PC-9 (cell line): ENCODE measurements at regions of chr18 and their contacts with region 1.

Region 1: DNA sequence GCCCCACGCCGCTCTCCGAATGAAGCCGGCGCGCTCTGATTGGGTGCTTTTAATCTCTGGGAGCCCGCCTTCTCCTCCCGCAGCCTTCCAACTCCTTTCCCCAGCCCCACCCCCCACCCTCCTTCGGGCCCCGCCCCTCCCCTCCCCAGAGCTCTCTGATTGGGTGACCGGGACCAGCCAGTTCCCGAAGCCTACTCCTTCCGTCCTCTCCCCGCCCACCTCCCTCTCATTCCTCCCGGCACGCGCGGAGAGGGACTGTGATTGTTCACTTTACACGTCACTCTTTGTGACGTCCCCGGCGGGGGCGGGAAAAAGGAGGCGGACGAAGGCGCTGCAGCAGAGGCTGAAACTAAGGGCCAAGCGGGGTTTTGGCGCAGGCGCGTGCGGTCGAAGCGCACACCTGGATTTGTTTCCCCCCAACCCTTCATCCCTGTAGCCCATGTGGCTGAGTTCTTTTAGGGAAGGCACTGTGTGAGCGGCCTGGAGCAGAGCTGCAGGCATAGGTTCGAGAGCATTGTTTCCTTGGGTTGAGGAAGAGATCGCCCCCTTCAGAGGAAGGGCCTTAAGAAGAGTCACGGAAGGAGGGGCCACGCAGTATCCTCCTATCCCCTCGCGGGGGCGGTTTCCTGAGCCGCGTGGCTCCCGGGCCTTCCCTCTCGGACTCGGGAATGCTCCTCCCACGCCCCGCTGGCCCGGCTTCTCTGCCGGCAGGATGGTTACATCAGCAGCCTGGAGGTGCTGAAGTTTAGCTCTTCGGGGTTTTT is at the start of gene MEX3C:
- DNase-seq: peak; percentile 94 to 95
- H3K4me3 ChIP-seq: peak within 1 kb of the TSS; percentile 92
- H3K27ac ChIP-seq: peak within 1 kb of the TSS; percentile 92
- H3K4me1 ChIP-seq: peaks cover 19% of the 10 kb centered on the region
- H3K27me3 ChIP-seq: no peaks in the 10 kb centered on the region
- CTCF ChIP-seq: peak; percentile 36; the same call in 1 of the 2 replicates
- total RNA-seq, gene MEX3C: 21.1 and 26.2 TPM in 2 replicates

Region 2: GRCh38 chr18:50902797-50903196 is 295.0 kb before region 1 on chr18:
- CTCF ChIA-PET with region 1: no interaction called
- POLR2A ChIA-PET with region 1: no interaction called
- intact Hi-C with region 1: no loop called
- DNase-seq: no peak
- H3K4me3 ChIP-seq: no peak overlapping the region
- H3K27ac ChIP-seq: no peak overlapping the region
- H3K4me1 ChIP-seq: no peaks in the 10 kb centered on the region
- H3K27me3 ChIP-seq: no peaks in the 10 kb centered on the region
- CTCF ChIP-seq: no peak

Region 3: GRCh38 chr18:51135795-51136194 is 62.0 kb before region 1 on chr18:
- CTCF ChIA-PET with region 1: no interaction called
- POLR2A ChIA-PET with region 1: no interaction called
- intact Hi-C with region 1: loop called (anchors 5 kb)
- DNase-seq: no peak
- H3K4me3 ChIP-seq: no peak overlapping the region
- H3K27ac ChIP-seq: no peak overlapping the region
- H3K4me1 ChIP-seq: peaks cover 32% of the 10 kb centered on the region
- H3K27me3 ChIP-seq: no peaks in the 10 kb centered on the region
- CTCF ChIP-seq: 0 out of 2 replicates have a peak, but pooled peaks have one; percentile 34

Region 4: GRCh38 chr18:51235011-51235789 is 37.4 kb after region 1 on chr18:
- CTCF ChIA-PET with region 1: no interaction called
- POLR2A ChIA-PET with region 1: interaction called, 7 read pairs
- intact Hi-C with region 1: loop called (anchors 5 kb)
- DNase-seq: peak; percentile 26 to 59
- H3K4me3 ChIP-seq: peak overlapping the region; percentile 31; the same call in 1 of the 2 replicates
- H3K27ac ChIP-seq: peak overlapping the region; percentile 64
- H3K4me1 ChIP-seq: peaks cover 36% of the 10 kb centered on the region
- H3K27me3 ChIP-seq: no peaks in the 10 kb centered on the region
- CTCF ChIP-seq: no peak

Region 5: DNA sequence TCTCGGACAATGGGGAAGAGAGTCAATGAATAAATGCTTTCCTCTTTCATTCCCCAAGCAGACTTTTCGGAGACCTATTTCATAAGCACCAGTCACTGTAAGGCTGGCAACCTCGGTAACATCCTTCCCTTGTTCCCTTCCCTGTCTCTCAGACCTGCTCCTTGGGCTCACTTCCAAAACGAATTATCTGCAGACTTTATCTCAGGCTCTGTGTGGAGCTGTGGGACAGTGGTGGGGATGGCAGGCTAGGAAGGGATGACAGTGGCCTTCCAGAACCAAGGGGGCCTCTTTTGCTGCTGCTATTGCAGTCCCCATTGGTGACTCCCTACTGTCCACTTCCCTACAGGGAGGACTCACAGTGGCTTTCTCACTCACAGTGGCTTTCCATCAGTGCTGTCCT is 185.3 kb after region 1 on chr18:
- CTCF ChIA-PET with region 1: no interaction called
- POLR2A ChIA-PET with region 1: no interaction called
- intact Hi-C with region 1: no loop called
- DNase-seq: no peak
- H3K4me3 ChIP-seq: no peak overlapping the region
- H3K27ac ChIP-seq: no peak overlapping the region
- H3K4me1 ChIP-seq: no peaks in the 10 kb centered on the region
- H3K27me3 ChIP-seq: no peaks in the 10 kb centered on the region
- CTCF ChIP-seq: no peak

Region 6: DNA sequence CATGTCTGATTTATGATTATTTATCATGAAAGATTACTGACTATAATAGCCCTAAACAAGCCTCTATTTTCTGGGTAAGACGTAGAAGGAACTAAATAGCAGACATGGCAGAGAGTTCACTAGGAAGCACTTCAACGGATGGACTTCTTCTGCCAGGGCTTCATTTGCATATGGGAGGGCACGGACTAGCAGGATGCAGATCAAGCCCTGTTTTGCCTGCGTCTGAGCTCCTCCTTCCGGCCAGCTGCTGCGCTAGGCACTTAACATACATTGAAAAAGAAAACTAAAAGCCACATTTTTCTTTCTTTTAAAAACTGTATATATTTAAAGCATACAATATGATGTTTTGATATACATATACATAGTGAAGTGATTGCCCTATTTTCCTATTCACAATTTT is 339.6 kb after region 1 on chr18:
- CTCF ChIA-PET with region 1: no interaction called
- POLR2A ChIA-PET with region 1: no interaction called
- intact Hi-C with region 1: loop called (anchors 1 kb)
- DNase-seq: peak in 1 of 2 experiments; percentile 10
- H3K4me3 ChIP-seq: no peak overlapping the region
- H3K27ac ChIP-seq: no peak overlapping the region
- H3K4me1 ChIP-seq: no peaks in the 10 kb centered on the region
- H3K27me3 ChIP-seq: no peaks in the 10 kb centered on the region
- CTCF ChIP-seq: no peak